ENCODE measurements at regions of chr15 and their contacts with region 1.

Region 1: GRCh38 chr15:34621675-34622074 is 38.2 kb upstream of the GOLGA8B start:
- DNase-seq: no peak
- ATAC-seq: no peak
- H3K4me3 Mint-ChIP-seq: no peak overlapping the region
- H3K27ac Mint-ChIP-seq: no peak overlapping the region
- H3K4me1 Mint-ChIP-seq: peaks cover 8% of the 10 kb centered on the region
- H3K27me3 Mint-ChIP-seq: peaks cover 40% of the 10 kb centered on the region

Region 2: DNA sequence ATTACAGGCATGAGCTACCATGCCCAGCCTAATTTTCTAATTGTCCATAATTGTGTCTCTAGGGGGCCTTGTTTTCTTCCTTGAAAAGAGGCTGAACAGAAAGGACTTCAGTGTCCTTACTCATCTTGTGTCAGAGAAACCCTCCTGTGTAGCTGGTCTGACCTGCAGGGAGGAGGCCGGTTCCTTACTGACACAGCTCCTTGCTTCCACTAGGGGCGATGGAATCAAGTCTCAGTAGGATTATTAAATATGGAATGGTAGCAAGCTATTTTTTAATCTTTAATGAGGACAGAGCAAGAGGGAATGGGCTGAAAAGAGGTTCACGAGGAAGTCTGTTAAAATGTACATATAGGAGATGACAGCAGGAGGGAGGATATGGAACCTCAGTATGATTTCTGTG is 263.3 kb before region 1 on chr15:
- CTCF ChIA-PET with region 1: no interaction called
- POLR2A ChIA-PET with region 1: no interaction called
- DNase-seq: no peak
- ATAC-seq: no peak
- H3K4me3 Mint-ChIP-seq: no peak overlapping the region
- H3K27ac Mint-ChIP-seq: no peak overlapping the region
- H3K4me1 Mint-ChIP-seq: peaks cover 9% of the 10 kb centered on the region
- H3K27me3 Mint-ChIP-seq: no peaks in the 10 kb centered on the region

Region 3: GRCh38 chr15:34496207-34496995 is 125.3 kb before region 1 on chr15:
- CTCF ChIA-PET with region 1: no interaction called
- POLR2A ChIA-PET with region 1: no interaction called
- DNase-seq: no peak
- ATAC-seq: peak; percentile 39
- H3K4me3 Mint-ChIP-seq: no peak overlapping the region
- H3K27ac Mint-ChIP-seq: no peak overlapping the region
- H3K4me1 Mint-ChIP-seq: peaks cover 11% of the 10 kb centered on the region
- H3K27me3 Mint-ChIP-seq: peaks cover 68% of the 10 kb centered on the region

Region 4: GRCh38 chr15:34610354-34610753 is 11.3 kb before region 1 on chr15:
- CTCF ChIA-PET with region 1: interaction called, 11 read pairs
- POLR2A ChIA-PET with region 1: no interaction called
- DNase-seq: no peak
- ATAC-seq: peak; percentile 63
- H3K4me3 Mint-ChIP-seq: no peak overlapping the region
- H3K27ac Mint-ChIP-seq: no peak overlapping the region
- H3K4me1 Mint-ChIP-seq: peaks cover 16% of the 10 kb centered on the region
- H3K27me3 Mint-ChIP-seq: peaks cover 35% of the 10 kb centered on the region

Region 5: GRCh38 chr15:34914317-34914716 is 292.6 kb after region 1 on chr15:
- CTCF ChIA-PET with region 1: interaction called, 10 read pairs
- POLR2A ChIA-PET with region 1: no interaction called
- DNase-seq: no peak
- ATAC-seq: no peak
- H3K4me3 Mint-ChIP-seq: no peak overlapping the region
- H3K27ac Mint-ChIP-seq: no peak overlapping the region
- H3K4me1 Mint-ChIP-seq: no peaks in the 10 kb centered on the region
- H3K27me3 Mint-ChIP-seq: no peaks in the 10 kb centered on the region